Panc1 (cell line): ENCODE measurements at regions of chr6 and their contacts with region 1.

Region 1: DNA sequence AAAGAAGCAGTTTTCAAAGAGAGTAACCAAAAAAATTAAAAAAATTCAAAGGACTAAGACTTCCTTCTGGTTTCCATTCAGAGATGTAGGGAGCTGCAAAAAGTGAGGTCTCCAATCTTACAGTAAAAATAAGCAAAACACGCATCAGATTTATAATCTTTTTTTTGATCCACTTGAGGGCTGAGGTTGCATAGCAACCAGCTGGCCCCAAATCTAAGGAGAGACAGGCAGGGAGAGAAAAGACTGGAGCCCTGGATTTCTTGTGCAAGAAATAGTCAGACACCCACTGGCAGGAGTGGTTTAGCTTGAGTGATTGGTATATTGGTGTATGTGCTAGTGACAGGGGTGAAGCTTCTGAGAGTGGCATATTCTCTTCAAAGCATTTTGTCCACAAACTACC is 135.9 kb upstream of the FUT9 start:
- DNase-seq: no peak
- ATAC-seq: no peak
- H3K4me3 ChIP-seq: no peak overlapping the region
- H3K27ac ChIP-seq: no peak overlapping the region
- H3K4me1 ChIP-seq: no peaks in the 10 kb centered on the region
- H3K27me3 ChIP-seq: no peaks in the 10 kb centered on the region
- CTCF ChIP-seq: no peak

Region 2: DNA sequence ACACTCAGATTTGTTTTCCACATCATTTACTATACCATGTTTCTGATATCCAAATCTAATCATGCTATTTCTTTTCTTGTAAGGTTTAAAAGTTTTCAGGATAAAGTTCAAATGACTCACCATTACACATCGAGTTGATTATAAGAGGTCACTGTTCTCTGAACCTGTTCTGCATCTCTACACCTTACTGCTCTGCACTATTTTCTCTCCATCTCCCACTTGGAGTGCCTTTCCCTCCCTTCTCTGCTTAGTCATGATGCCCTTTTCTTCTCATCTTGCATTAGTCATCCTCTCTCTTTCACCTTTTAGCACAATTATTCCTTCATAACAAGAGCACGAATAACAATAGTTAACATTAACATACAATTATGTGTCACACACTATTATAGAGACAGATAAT is 98.4 kb after region 1 on chr6:
- CTCF ChIA-PET with region 1: no interaction called
- POLR2A ChIA-PET with region 1: no interaction called
- in situ Hi-C with region 1: loop called (anchors 5 kb)
- intact Hi-C with region 1: no loop called
- DNase-seq: no peak
- ATAC-seq: no peak
- H3K4me3 ChIP-seq: no peak overlapping the region
- H3K27ac ChIP-seq: no peak overlapping the region
- H3K4me1 ChIP-seq: no peaks in the 10 kb centered on the region
- H3K27me3 ChIP-seq: no peaks in the 10 kb centered on the region
- CTCF ChIP-seq: no peak